G401 (cell line): ENCODE measurements at regions of chr2 and their contacts with region 1.

Region 1: GRCh38 chr2:159615140-159615951 is 1.0 kb downstream of the BAZ2B start:
- DNase-seq: peak; percentile 89

Region 2: GRCh38 chr2:159516241-159516766 is 99.0 kb before region 1 on chr2:
- in situ Hi-C with region 1: no loop called
- DNase-seq: peak; percentile 80

Region 3: GRCh38 chr2:159712143-159712928 is 97.0 kb after region 1 on chr2 and contains the start of gene MARCHF7:
- in situ Hi-C with region 1: loop called (anchors 25 kb)
- DNase-seq: peak; percentile 91
- total RNA-seq, gene MARCHF7: 144 and 189 TPM in 2 replicates